Activated CD8-positive, alpha-beta T cell treated with anti-CD3 and anti-CD28 coated beads, Interleukin-2, amount 10 ng/mL, durations not matched to agents 7 days and 5 days (primary cell): ENCODE measurements at regions of chr10 and their contacts with region 1.

Region 1: GRCh38 chr10:101782811-101783735 is at the start of gene NPM3:
- DNase-seq: peak; percentile 92
- ATAC-seq: peak; percentile 84
- H3K4me3 Mint-ChIP-seq: peak within 1 kb of the TSS; percentile 100
- H3K27ac Mint-ChIP-seq: peak within 1 kb of the TSS; percentile 98
- H3K4me1 Mint-ChIP-seq: peaks cover 57% of the 10 kb centered on the region
- H3K27me3 Mint-ChIP-seq: peaks cover 5% of the 10 kb centered on the region
- total RNA-seq, gene NPM3: 49.7 to 58.3 TPM

Region 2: DNA sequence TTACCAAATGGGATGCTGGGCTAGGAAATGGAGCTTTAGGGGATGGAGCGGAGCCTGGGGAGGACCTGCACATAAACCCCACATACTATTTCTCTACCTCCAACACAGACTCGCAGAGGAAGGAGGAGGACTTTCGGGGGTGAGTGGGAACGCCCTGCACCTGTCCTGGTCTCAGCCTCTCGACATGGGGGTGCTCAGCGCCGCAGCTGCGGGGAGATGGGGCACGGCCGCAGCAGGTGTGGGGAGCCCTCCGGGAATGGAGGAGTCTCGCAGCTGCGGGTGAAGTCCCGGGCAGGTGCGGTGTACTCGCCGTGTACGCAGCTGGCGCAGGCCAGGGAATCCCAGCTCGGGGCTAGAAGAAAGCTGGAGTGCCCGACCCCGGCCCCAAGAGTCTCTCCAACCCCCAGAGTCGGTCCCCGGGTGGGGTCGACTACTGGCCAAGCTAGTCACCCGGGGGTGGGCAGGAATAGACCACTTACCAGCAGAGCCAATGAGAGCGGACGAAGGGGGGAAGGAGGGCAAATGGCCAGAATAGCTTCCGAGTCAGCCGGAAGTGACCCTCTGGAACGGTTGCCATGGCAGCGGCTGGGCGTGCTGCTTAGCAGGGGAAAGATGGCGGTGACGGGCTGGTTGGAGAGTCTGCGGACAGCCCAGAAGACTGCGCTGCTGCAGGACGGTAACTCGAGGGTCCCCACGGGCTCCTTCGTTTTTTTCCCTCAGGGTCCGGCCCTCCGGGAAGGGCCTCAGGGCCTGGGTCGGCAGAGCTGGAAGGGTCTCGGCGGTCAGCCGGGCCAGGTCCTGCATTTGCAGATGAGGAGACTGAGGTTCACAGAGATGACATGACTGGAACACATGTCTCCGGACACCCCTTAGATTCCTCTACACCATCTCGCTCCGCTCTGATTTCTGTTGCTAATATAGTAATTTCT is 195.1 kb before region 1 on chr10 and contains the starts of genes DPCD and POLL:
- CTCF ChIA-PET with region 1: interaction called, 29 read pairs
- POLR2A ChIA-PET with region 1: no interaction called
- DNase-seq: peak; percentile 95
- ATAC-seq: peak; percentile 94
- H3K4me3 Mint-ChIP-seq: peak within 1 kb of the TSS; percentile 91
- H3K27ac Mint-ChIP-seq: peak within 1 kb of the TSS; percentile 85
- H3K4me1 Mint-ChIP-seq: peaks cover 24% of the 10 kb centered on the region
- H3K27me3 Mint-ChIP-seq: no peaks in the 10 kb centered on the region
- total RNA-seq, gene DPCD: 5.1 to 6.2 TPM
- total RNA-seq, gene POLL: 25.3 to 28.5 TPM

Region 3: GRCh38 chr10:101602761-101603398 is 180.2 kb before region 1 on chr10:
- CTCF ChIA-PET with region 1: interaction called, 242 read pairs
- POLR2A ChIA-PET with region 1: interaction called, 4 read pairs
- DNase-seq: peak; percentile 83
- ATAC-seq: peak; percentile 97
- H3K4me3 Mint-ChIP-seq: no peak overlapping the region
- H3K27ac Mint-ChIP-seq: no peak overlapping the region
- H3K4me1 Mint-ChIP-seq: no peaks in the 10 kb centered on the region
- H3K27me3 Mint-ChIP-seq: no peaks in the 10 kb centered on the region

Region 4: GRCh38 chr10:101769541-101770180 is 13.4 kb before region 1 on chr10:
- CTCF ChIA-PET with region 1: interaction called, 30 read pairs
- POLR2A ChIA-PET with region 1: no interaction called
- DNase-seq: no peak
- ATAC-seq: no peak
- H3K4me3 Mint-ChIP-seq: no peak overlapping the region
- H3K27ac Mint-ChIP-seq: no peak overlapping the region
- H3K4me1 Mint-ChIP-seq: peaks cover 3% of the 10 kb centered on the region
- H3K27me3 Mint-ChIP-seq: peaks cover 58% of the 10 kb centered on the region

Region 5: DNA sequence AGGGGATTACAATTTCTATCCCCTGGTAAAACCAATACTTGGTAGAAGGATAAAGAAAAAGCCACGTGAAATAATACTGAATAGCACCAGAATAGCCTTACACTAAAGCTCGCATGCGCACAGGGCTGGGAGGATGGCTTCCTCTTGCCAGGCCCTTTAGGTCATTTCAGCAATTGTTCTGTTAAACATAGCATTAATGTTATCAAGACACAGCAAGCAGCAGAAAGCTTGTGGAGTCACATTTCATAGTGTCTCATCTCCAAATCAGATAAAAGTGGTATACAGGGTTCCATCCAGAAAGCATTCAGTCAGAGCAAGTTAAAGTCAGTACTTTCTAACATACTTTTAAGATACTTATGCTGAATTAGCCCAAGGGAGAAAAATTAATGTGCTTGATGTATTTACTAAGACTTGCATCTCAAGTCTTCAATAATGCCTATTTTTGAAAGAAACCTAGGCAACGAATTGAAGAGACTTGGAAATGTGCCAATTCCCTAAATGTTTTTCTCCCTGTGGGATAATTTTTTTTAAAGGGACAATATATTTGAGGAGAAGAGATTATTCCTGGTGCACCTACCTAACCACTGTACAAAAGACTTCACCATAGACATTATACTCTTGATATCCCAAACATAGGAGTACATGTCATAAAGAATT is 14.5 kb after region 1 on chr10:
- CTCF ChIA-PET with region 1: interaction called, 69 read pairs
- POLR2A ChIA-PET with region 1: interaction called, 3 read pairs
- DNase-seq: no peak
- ATAC-seq: no peak
- H3K4me3 Mint-ChIP-seq: no peak overlapping the region
- H3K27ac Mint-ChIP-seq: no peak overlapping the region
- H3K4me1 Mint-ChIP-seq: peaks cover 8% of the 10 kb centered on the region
- H3K27me3 Mint-ChIP-seq: no peaks in the 10 kb centered on the region

Region 6: DNA sequence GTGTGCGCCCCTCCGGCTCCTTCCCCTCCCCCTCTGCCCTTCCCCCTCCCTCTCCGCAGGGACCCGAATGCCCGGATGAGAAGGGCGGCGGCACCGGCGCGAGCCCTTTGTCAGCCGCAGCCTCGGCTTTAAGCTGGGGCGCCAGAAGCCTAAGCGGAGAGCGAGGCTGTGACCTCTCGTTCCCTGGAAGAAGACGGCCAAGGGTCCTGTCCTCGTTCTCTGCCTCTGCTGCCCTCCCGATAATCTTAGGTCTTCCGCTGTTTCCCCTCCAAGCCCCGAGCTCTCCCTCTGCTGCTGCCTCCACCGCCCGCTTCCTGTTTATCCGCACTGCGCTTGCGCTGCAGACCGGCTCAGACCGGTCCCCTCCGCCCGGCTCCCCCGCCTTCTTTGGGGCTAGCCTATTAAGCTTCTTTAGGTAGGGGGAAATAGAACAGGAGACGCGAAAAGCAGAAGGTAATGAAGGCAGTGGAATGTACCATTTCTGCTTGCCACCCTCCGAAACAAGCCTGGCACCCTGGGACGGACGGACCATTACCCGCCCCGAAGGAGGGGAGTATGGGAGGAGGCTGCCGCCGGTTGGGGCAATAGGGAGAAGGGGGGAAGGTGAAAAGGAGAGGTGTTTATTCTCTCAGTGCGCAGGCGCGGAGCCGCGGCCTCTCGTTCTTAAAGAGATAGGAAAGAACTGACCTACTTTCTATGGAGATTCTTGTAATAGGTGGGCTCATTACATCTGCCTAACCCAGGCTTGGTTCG is 35.2 kb after region 1 on chr10 and contains the start of gene OGA:
- CTCF ChIA-PET with region 1: interaction called, 9 read pairs
- POLR2A ChIA-PET with region 1: interaction called, 18 read pairs
- DNase-seq: peak; percentile 99
- ATAC-seq: peak; percentile 93
- H3K4me3 Mint-ChIP-seq: peak within 1 kb of the TSS; percentile 96
- H3K27ac Mint-ChIP-seq: peak within 1 kb of the TSS; percentile 99
- H3K4me1 Mint-ChIP-seq: peaks cover 31% of the 10 kb centered on the region
- H3K27me3 Mint-ChIP-seq: no peaks in the 10 kb centered on the region
- total RNA-seq, gene OGA: 122 to 129 TPM